Mammary epithelial cell (primary cell): ENCODE measurements at regions of chr22 and their contacts with region 1.

Region 1: GRCh38 chr22:19447388-19448075 is at the start of gene C22orf39:
- DNase-seq: peak; percentile 92
- H3K4me3 ChIP-seq: peak within 1 kb of the TSS; percentile 61 to 73 (median 68)
- H3K27ac ChIP-seq: peak within 1 kb of the TSS; percentile 58
- H3K4me1 ChIP-seq: peaks cover 18% of the 10 kb centered on the region
- H3K27me3 ChIP-seq: no peaks in the 10 kb centered on the region
- CTCF ChIP-seq: no peak
- total RNA-seq, gene C22orf39: 12.2 to 14.7 TPM

Region 2: DNA sequence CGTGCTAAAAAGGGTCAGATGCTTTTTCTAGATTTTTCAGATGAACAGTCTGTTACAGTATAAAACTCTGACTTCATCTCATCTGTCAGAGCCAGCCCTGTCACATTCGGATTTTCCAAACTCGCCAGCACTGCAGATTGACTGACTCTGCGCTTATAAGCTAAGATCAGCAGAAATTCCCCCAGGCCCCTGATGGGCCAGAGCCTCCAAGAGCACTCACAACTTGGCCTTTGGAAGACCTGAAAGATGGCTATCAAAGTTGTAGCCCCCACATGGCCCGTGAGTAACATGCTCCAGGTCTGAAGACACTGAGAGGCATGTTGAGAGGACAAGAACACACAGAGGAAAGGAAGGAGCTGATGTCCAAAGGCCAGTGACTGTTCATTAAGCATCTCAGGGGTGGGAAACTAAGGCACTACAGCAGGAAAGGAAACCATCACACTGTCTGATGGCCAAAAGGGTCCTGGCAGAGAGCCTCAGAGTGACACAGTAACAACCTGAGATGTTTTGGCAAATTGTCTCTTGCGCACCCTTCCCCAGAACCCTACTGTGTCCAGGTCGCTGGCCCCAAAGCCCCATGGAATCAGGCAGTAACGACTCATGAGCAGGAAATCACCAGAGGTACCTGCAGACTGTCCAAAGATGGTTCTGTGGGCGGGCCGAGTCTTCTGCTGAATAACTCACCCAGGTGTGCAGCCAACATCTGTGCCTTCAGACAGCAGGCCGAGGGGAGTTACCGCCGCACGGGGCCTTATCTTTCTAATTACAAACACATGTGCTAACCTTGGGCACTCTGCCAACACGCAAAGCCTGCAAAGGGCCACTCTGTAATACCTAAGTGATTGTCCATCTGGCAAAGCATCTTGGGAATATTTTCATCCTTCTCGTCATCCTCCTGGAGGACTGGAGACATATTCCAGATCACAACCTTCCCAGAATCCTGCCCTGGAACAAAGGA is 39.6 kb before region 1 on chr22:
- CTCF ChIA-PET with region 1: no interaction called
- dilution Hi-C with region 1: no loop called
- in situ Hi-C with region 1: no loop called
- intact Hi-C with region 1: no loop called
- DNase-seq: no peak
- H3K4me3 ChIP-seq: no peak overlapping the region
- H3K27ac ChIP-seq: no peak overlapping the region
- H3K4me1 ChIP-seq: no peaks in the 10 kb centered on the region
- H3K27me3 ChIP-seq: no peaks in the 10 kb centered on the region
- CTCF ChIP-seq: no peak

Region 3: DNA sequence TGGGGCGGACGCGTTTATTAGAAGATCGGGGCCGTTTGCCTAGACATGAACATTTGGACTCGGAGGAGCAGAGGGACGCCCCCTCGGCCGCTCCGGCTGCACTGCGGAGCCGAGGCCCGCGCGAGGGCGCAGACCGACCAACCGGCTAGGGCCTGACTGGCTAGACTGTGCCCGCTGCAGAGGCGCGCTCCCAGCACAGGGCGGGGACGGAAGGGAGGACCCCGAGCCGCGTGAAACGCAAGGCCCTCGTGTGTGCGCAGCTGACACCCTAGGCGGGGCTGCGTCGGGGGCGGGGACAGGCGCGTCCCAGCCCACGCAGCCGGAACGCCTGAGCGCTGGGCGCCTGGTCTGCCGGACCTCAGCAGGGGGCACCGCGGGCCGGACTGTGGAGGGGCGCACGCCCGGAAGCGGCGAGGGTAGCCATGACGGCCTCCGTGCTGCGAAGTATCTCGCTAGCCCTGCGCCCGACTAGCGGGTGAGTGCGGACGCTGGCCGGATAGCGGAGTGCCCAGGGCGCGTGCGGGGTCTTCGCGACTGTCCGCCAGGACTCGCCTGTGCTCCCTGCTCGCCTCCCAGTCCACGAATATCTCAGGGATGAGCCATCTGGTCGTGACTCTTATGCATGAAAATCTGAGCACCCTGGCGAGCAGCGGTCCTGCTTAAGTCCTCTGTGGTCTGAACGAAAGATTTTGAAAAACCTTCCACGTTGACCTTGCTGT is 15.2 kb before region 1 on chr22 and contains the start of gene MRPL40:
- CTCF ChIA-PET with region 1: no interaction called
- dilution Hi-C with region 1: no loop called
- in situ Hi-C with region 1: no loop called
- intact Hi-C with region 1: loop called (anchors 1 kb)
- DNase-seq: peak; percentile 92
- H3K4me3 ChIP-seq: peak within 1 kb of the TSS; percentile 70 to 95 (median 93)
- H3K27ac ChIP-seq: peak within 1 kb of the TSS; percentile 63
- H3K4me1 ChIP-seq: peaks cover 17% of the 10 kb centered on the region
- H3K27me3 ChIP-seq: no peaks in the 10 kb centered on the region
- CTCF ChIP-seq: no peak
- total RNA-seq, gene MRPL40: 22.8 to 40.0 TPM

Region 4: DNA sequence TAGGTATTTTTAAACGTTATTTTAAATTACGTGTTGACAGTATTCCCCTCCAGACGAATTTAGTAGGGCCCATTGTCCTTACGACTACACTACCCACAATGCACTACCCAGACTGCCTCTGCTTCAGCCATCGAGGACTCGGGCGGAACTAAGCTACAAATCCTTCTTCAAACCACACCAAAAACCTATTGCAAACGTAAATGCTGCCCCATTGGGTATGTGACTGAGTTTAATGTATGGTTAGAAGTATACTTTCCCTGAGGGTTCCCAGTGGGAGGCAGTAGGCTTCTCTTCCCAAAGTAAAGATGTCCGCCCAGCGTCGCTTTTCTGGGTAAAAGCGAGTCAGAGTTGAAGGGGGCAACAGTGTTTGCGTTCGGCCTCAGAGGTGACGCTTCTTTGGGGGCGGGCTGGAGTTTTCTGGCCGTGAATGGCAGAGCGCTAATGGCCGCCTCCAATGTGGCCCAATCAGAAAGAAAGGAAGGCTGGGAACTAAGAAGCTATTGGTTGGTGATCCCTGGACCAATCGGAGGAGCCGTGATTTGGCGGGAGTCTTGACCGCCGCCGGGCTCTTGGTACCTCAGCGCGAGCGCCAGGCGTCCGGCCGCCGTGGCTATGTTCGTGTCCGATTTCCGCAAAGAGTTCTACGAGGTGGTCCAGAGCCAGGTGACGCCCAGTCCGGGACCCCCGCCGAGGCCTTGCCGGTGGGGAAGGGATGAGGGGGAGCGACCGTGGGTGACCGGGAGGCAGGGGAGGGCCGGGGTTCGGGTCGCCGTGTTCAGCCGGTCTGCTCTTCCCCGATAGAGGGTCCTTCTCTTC is 32.0 kb after region 1 on chr22 and contains the start of gene CDC45:
- CTCF ChIA-PET with region 1: no interaction called
- dilution Hi-C with region 1: no loop called
- in situ Hi-C with region 1: no loop called
- intact Hi-C with region 1: loop called (anchors 1 kb)
- DNase-seq: peak; percentile 98
- H3K4me3 ChIP-seq: peak within 1 kb of the TSS; percentile 40 to 93 (median 91)
- H3K27ac ChIP-seq: peak within 1 kb of the TSS; percentile 100
- H3K4me1 ChIP-seq: peaks cover 30% of the 10 kb centered on the region
- H3K27me3 ChIP-seq: no peaks in the 10 kb centered on the region
- CTCF ChIP-seq: no peak
- total RNA-seq, gene CDC45: 2.2 to 31.1 TPM